AG04450 (cell line): ENCODE measurements at regions of chr11 and their contacts with region 1.

Region 1: DNA sequence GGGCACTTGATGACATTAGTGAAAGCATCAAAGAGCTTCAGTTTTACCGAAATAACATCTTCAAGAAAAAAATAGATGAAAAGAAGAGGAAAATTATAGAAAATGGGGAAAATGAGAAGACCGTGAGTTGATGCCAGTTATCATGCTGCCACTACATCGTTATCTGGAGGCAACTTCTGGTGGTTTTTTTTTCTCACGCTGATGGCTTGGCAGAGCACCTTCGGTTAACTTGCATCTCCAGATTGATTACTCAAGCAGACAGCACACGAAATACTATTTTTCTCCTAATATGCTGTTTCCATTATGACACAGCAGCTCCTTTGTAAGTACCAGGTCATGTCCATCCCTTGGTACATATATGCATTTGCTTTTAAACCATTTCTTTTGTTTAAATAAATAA is 10.6 kb downstream of the REXO2 start:
- DNase-seq: no peak
- H3K4me3 ChIP-seq: no peak overlapping the region
- H3K27ac ChIP-seq: no peak overlapping the region
- H3K27me3 ChIP-seq: no peaks in the 10 kb centered on the region
- CTCF ChIP-seq: no peak

Region 2: DNA sequence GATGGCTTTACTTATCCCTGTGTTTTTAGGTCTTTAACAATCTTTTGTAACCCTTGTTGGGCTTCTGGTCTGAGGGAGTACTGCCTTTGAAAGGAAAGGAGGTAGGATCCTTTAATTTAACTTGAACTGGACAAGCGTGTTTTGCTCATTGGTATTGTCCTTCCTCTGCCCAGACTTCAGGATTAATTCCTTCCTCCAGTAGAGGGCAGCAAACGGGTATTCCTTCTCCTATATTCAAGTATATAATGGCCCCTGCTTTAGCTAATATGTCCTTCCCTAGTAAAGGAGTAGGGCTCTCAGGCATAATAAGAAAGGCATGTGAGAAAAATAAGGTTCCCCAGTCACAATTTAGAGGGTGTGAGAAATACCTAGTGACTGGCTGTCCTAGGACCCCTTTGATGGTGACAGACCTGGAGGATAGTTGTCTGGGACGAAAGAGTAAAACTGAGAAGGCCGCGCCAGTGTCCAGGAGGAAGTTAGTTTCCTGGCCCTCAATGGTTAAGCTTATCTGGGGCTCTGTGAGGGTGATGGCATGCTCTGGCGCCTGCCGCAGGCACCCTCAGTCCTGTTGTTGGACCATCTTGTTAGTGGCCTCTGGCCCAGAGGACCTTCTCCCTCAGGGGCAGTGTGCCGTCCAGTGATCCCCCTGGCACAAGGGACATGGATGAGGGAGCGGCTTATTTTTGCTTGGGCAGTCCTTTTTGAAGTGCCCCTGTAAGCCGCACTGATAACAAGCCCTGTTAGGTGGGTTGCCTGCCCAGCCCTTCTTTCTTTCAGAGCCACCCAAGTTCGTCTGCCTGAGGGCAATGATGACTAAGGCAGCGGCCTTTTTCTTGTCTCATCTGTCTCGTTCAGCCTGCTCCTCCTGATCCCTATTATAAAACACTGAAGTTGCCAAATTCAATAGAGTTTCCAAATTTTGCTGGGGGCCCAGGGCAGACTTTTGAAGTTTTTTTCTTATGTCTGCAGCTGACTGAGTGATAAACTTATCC is 101.3 kb before region 1 on chr11:
- CTCF ChIA-PET with region 1: interaction called, 12 read pairs
- POLR2A ChIA-PET with region 1: no interaction called
- DNase-seq: peak; percentile 43
- H3K4me3 ChIP-seq: no peak overlapping the region
- H3K27ac ChIP-seq: no peak overlapping the region
- H3K27me3 ChIP-seq: no peaks in the 10 kb centered on the region
- CTCF ChIP-seq: peak; percentile 66